ENCODE measurements at regions of chr20 and their contacts with region 1.

Region 1: GRCh38 chr20:354298-355064 is 7.6 kb downstream of the NRSN2 start:
- DNase-seq: peak; percentile 85
- H3K4me3 Mint-ChIP-seq: no peak overlapping the region
- H3K27ac Mint-ChIP-seq: no peak overlapping the region
- H3K4me1 Mint-ChIP-seq: peaks cover 13% of the 10 kb centered on the region
- H3K27me3 Mint-ChIP-seq: peaks cover 25% of the 10 kb centered on the region

Region 2: GRCh38 chr20:407133-407952 is 52.9 kb after region 1 on chr20:
- CTCF ChIA-PET with region 1: interaction called, 12 read pairs
- DNase-seq: peak; percentile 85
- H3K4me3 Mint-ChIP-seq: peak overlapping the region; percentile 85
- H3K27ac Mint-ChIP-seq: peak overlapping the region; percentile 95
- H3K4me1 Mint-ChIP-seq: peaks cover 55% of the 10 kb centered on the region
- H3K27me3 Mint-ChIP-seq: no peaks in the 10 kb centered on the region

Region 3: DNA sequence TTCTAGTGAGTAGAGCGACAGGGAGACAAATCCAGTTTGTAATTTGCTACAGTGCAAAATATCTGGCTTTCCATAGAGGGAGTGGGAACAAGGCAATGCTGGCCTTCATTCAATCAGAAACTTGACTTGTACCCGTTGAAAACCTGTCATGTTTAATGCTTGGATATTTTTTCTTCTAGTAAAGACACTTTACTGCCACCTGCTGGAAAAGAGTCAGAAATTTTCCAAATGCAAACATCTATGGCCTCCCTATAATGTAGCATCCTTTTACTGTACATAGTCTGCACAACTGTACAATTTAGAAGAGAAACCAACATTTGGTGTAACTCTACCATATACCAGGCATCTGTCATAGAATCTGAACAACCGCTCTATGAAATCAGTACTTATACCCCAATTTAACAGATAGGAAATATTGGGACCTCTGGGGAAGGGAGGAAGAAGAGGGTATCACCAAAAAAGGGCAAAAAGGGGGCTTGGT is 124.5 kb after region 1 on chr20:
- CTCF ChIA-PET with region 1: interaction called, 51 read pairs
- DNase-seq: peak; percentile 45
- H3K4me3 Mint-ChIP-seq: no peak overlapping the region
- H3K27ac Mint-ChIP-seq: peak overlapping the region; percentile 79
- H3K4me1 Mint-ChIP-seq: peaks cover 51% of the 10 kb centered on the region
- H3K27me3 Mint-ChIP-seq: no peaks in the 10 kb centered on the region

Region 4: GRCh38 chr20:645318-646106 is 291.0 kb after region 1 on chr20:
- CTCF ChIA-PET with region 1: interaction called, 36 read pairs
- DNase-seq: peak; percentile 77
- H3K4me3 Mint-ChIP-seq: no peak overlapping the region
- H3K27ac Mint-ChIP-seq: no peak overlapping the region
- H3K4me1 Mint-ChIP-seq: peaks cover 12% of the 10 kb centered on the region
- H3K27me3 Mint-ChIP-seq: peaks cover 38% of the 10 kb centered on the region

Region 5: GRCh38 chr20:667391-667964 is 313.0 kb after region 1 on chr20:
- CTCF ChIA-PET with region 1: interaction called, 11 read pairs
- DNase-seq: peak; percentile 76
- H3K4me3 Mint-ChIP-seq: no peak overlapping the region
- H3K27ac Mint-ChIP-seq: no peak overlapping the region
- H3K4me1 Mint-ChIP-seq: peaks cover 15% of the 10 kb centered on the region
- H3K27me3 Mint-ChIP-seq: peaks cover 94% of the 10 kb centered on the region